ENCODE measurements at regions of chrX and their contacts with region 1.

Region 1: GRCh38 chrX:101595739-101596419 is 21.9 kb downstream of the ARMCX6 start:
- DNase-seq: no peak
- ATAC-seq: peak; percentile 56

Region 2: DNA sequence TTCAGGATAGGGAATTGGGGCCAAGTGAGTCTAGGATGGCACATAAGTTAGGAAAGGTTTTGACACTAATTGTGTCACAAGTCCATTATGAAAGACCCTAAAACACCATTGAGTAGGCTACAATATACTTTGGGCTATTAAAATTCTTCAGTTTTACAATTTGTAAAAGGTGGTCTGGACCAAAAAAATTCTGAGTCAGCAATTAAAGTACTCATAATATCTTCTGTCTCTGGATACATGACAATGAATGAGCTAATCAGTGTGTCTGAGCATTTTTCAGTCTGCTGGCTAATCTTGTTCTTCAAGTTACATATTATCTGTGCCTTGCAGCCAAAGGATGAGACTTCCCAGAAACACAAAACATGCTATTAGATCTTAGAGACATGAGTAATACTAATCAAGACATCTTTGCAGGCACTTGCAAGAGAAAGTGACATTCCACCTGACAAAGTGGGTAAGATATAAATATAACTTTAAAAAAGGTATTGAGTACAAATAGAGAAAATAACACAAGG is 31.2 kb before region 1 on chrX:
- intact Hi-C with region 1: no loop called
- DNase-seq: no peak
- ATAC-seq: no peak

Region 3: DNA sequence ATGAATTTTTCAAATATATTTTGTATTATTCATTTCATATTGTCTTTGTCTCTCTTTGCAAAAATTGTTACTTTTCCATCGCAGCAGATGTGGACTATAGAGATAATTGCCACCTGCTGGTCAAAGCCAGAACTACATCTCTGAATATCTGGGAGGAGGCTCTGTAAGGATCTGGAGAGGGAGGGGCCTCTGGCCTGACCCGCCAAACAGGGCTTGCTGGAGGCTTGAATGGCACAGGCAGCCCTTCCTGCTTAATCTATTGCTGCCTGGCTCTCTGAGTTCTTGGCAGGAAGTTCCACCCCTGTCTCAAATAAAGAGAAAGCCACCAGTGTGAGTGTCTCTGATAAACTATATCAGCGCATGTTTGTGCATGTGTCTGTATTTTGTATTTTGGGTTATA is 203.5 kb after region 1 on chrX:
- intact Hi-C with region 1: loop called (anchors 5 kb)
- DNase-seq: peak; percentile 76
- ATAC-seq: peak; percentile 99

Measured in Right ventricle myocardium inferior (tissue), 1 donor.